CD8-positive, alpha-beta memory T cell (primary cell): ENCODE measurements at regions of chr19 and their contacts with region 1.

Region 1: DNA sequence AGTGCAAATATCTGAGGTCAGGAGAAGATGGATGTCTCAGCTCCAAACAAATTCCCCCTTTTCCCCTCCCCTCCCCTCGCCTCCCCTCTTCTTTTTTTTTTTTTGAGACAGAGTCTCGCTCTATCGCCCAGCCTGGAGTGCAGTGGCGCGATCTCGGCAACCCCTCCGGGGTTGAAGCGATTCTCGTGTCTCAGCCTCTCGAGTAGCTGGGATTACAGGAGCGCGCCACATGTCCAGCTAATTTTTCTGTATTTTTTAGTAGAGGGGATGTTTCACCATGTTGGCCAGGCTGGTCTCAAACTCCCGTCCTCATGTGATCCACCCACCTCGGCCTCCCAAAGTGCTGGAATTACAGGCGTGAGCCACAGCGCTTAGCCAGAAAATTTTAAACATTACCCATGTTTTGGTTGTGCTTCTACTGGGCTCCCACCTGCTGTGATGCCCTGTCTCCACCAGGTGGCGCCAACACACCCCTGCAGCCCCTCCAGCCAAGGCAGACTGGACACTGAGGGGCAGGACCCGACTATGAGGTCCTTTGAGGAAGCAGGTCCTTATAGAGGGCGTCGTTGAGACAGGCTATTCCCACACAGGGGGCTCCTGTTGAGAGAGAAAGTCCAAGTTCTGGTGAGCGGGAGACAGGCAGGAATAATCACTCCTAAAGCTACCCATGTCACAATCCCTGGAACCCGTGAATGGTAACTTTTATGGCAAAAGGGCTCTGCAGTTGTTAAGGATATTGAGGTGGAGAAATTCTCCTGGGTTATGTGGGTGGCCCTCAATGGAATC is 6.3 kb downstream of the ERICH4 start:
- DNase-seq: peak; percentile 54 to 76 (median 66)
- H3K4me3 ChIP-seq: peak overlapping the region; percentile 39
- H3K4me3 Mint-ChIP-seq: peak overlapping the region; percentile 10 to 69 (median 62)
- H3K27ac ChIP-seq: no peak overlapping the region
- H3K27ac Mint-ChIP-seq: peak overlapping the region in 1 of 8 donors; percentile 26
- H3K4me1 ChIP-seq: peaks cover 5% of the 10 kb centered on the region
- H3K4me1 Mint-ChIP-seq: peaks cover 3 to 11% (median 6%) of the 10 kb centered on the region in 3 donors
- H3K27me3 ChIP-seq: no peaks in the 10 kb centered on the region
- H3K27me3 Mint-ChIP-seq: peaks cover 16 to 17% of the 10 kb centered on the region in 2 donors

Region 2: DNA sequence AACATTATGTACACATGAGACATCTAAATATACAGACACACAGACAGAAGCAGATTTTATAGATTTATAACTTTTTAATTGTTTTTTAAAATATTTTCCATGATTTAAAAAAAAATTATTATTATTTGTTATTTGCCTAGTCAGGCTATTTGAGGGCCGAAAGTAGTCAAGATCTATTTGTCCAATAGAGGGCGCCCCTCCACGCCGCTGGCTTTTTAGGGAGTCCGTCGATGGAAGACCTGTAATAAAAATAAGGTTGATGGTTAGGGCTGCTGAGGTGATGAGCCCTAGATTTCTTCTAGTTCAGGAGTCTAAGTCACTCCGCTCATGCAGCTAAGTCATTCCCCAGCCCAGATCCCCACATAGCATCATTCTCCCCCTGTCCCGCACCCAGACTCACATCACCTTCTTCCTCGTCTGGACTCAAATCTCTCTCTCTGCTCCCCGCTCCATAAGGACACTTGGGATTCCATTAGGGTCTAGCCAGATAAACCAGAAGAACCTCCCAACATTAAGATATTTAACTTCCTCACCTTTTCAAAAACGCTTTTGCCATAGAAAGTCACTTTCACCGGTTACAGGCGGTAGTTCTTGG is 92.8 kb after region 1 on chr19:
- CTCF ChIA-PET with region 1: interaction called, 12 read pairs
- POLR2A ChIA-PET with region 1: no interaction called
- DNase-seq: peak; percentile 61 to 86 (median 69)
- H3K4me3 ChIP-seq: no peak overlapping the region
- H3K4me3 Mint-ChIP-seq: peak overlapping the region in 6 of 7 donors; percentile 15 to 57 (median 53)
- H3K27ac ChIP-seq: no peak overlapping the region
- H3K27ac Mint-ChIP-seq: peak overlapping the region; percentile 9 to 94 (median 37)
- H3K4me1 ChIP-seq: peaks cover 46% of the 10 kb centered on the region
- H3K4me1 Mint-ChIP-seq: peaks cover 42 to 51% (median 49%) of the 10 kb centered on the region in 3 donors
- H3K27me3 ChIP-seq: no peaks in the 10 kb centered on the region
- H3K27me3 Mint-ChIP-seq: no peaks in the 10 kb centered on the region

Region 3: GRCh38 chr19:41563854-41564514 is 114.7 kb after region 1 on chr19:
- CTCF ChIA-PET with region 1: interaction called, 94 read pairs
- POLR2A ChIA-PET with region 1: interaction called, 7 read pairs
- DNase-seq: peak in 4 of 5 donors; percentile 32 to 80 (median 64)
- H3K4me3 ChIP-seq: peak overlapping the region; percentile 52
- H3K4me3 Mint-ChIP-seq: peak overlapping the region in 6 of 7 donors; percentile 53 to 88 (median 64)
- H3K27ac ChIP-seq: no peak overlapping the region
- H3K27ac Mint-ChIP-seq: peak overlapping the region in 6 of 8 donors; percentile 68 to 93 (median 84)
- H3K4me1 ChIP-seq: peaks cover 62% of the 10 kb centered on the region
- H3K4me1 Mint-ChIP-seq: peaks cover 74 to 90% (median 88%) of the 10 kb centered on the region in 3 donors
- H3K27me3 ChIP-seq: no peaks in the 10 kb centered on the region
- H3K27me3 Mint-ChIP-seq: no peaks in the 10 kb centered on the region

Region 4: GRCh38 chr19:41570639-41571112 is 121.4 kb after region 1 on chr19:
- CTCF ChIA-PET with region 1: interaction called, 94 read pairs
- POLR2A ChIA-PET with region 1: no interaction called
- DNase-seq: peak; percentile 75 to 87 (median 79)
- H3K4me3 ChIP-seq: no peak overlapping the region
- H3K4me3 Mint-ChIP-seq: peak overlapping the region in 5 of 7 donors; percentile 29 to 61 (median 54)
- H3K27ac ChIP-seq: no peak overlapping the region
- H3K27ac Mint-ChIP-seq: peak overlapping the region in 7 of 8 donors; percentile 29 to 83 (median 64)
- H3K4me1 ChIP-seq: peaks cover 33% of the 10 kb centered on the region
- H3K4me1 Mint-ChIP-seq: peaks cover 47 to 61% (median 56%) of the 10 kb centered on the region in 3 donors
- H3K27me3 ChIP-seq: no peaks in the 10 kb centered on the region
- H3K27me3 Mint-ChIP-seq: no peaks in the 10 kb centered on the region

Region 5: DNA sequence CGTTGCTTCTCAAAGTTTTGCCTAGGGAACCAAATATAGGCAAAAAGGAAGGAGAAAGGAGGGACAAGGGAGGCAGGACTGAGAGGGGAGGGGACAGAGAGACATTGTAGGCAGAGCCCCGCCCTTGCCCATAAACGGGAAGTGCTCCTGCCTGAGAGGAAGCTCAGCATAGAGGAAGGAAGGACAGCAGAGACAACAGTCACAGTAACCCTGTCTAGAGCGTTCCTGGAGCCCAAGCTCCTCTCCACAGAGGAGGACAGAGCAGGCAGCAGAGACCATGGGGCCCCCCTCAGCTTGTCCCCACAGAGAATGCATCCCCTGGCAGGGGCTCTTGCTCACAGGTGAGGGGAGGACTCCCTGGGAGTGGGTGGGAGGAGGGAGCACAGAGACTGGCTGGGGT is 126.7 kb after region 1 on chr19 and contains the start of gene CEACAM21:
- CTCF ChIA-PET with region 1: interaction called, 94 read pairs
- POLR2A ChIA-PET with region 1: no interaction called
- DNase-seq: peak in 1 of 5 donors; percentile 42
- H3K4me3 ChIP-seq: peak within 1 kb of the TSS; percentile 46
- H3K4me3 Mint-ChIP-seq: peak within 1 kb of the TSS in 6 of 7 donors; percentile 24 to 85 (median 52)
- H3K27ac ChIP-seq: no peak within 1 kb of the TSS
- H3K27ac Mint-ChIP-seq: peak within 1 kb of the TSS in 7 of 8 donors; percentile 35 to 88 (median 75)
- H3K4me1 ChIP-seq: peaks cover 20% of the 10 kb centered on the region
- H3K4me1 Mint-ChIP-seq: peaks cover 26 to 28% (median 27%) of the 10 kb centered on the region in 3 donors
- H3K27me3 ChIP-seq: no peaks in the 10 kb centered on the region
- H3K27me3 Mint-ChIP-seq: no peaks in the 10 kb centered on the region
- total RNA-seq, gene CEACAM21: 26.8 to 29.2 TPM

Region 6: DNA sequence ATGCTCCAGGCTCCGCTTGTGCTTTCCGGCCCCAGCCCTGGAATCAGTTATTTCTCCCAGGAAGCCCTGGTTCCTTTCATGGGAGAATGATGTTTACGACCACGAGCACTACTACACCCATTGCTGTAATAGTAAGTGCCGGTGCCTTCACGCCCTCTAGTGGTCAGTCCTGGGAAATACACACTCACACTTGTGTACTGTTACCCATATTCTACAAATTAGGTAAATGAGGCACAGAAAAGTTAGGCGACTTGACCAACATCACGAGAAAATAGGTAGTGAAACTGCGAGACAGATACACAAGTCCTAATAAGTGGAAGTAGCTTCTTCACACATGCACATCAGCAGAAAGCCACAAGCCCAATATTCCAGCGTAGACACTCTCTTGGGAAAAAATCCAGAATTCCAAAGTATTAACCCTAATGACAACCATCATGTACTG is 148.3 kb after region 1 on chr19:
- CTCF ChIA-PET with region 1: interaction called, 20 read pairs
- POLR2A ChIA-PET with region 1: no interaction called
- DNase-seq: peak; percentile 47 to 81 (median 64)
- H3K4me3 ChIP-seq: no peak overlapping the region
- H3K4me3 Mint-ChIP-seq: peak overlapping the region in 1 of 7 donors; percentile 36
- H3K27ac ChIP-seq: no peak overlapping the region
- H3K27ac Mint-ChIP-seq: peak overlapping the region in 2 of 8 donors; percentile 27 to 52
- H3K4me1 ChIP-seq: no peaks in the 10 kb centered on the region
- H3K4me1 Mint-ChIP-seq: peaks cover 6 to 13% (median 8%) of the 10 kb centered on the region in 3 donors
- H3K27me3 ChIP-seq: no peaks in the 10 kb centered on the region
- H3K27me3 Mint-ChIP-seq: peaks cover 13 to 62% of the 10 kb centered on the region in 2 donors